Naive thymus-derived CD4-positive, alpha-beta T cell (primary cell): ENCODE measurements at regions of chr12 and their contacts with region 1.

Region 1: DNA sequence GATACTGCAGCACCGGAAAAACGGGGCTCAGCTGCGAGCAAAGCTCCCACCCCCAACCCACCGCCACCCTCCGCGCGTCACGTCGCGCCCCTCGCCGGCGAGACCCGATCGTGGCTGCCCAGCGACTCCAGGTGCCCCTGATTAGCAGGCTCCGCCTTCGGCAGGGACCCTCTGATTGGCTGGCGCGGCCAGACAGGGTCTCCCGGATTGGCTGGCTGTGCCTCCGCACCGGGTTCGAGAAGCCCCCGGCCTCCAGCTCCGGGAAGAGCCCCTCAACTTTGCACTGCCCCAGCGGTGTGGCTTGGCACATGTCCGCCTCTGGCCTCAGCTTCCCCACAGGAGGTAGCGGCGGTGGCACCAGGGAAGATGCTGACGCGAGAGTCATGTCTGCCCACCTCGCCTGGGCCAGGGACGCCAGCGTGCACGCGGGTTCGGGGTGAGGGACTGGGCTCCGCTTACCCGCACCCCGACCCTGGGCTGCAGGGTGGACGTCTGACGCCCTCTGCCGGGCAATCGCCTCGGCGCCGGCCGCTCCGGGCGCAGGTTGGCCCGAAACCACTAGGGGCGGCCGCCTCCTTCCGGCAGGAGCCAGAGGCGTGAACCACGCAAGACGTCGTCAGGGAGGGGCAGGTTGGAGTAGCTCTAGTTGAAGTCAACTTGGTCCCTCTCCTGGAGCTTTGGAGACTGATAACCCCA is 498 bp upstream of the RHOF start:
- DNase-seq: peak; percentile 91 to 98 (median 95)
- ATAC-seq: peak; percentile 77
- H3K4me3 ChIP-seq: peak overlapping the region; percentile 99
- H3K4me3 Mint-ChIP-seq: peak overlapping the region; percentile 84 to 99 (median 93)
- H3K27ac ChIP-seq: peak overlapping the region; percentile 96
- H3K27ac Mint-ChIP-seq: peak overlapping the region; percentile 85 to 99 (median 95)
- H3K4me1 ChIP-seq: peaks cover 44 to 50% of the 10 kb centered on the region in 2 donors
- H3K4me1 Mint-ChIP-seq: peaks cover 44 to 72% (median 59%) of the 10 kb centered on the region in 7 donors
- H3K27me3 ChIP-seq: no peaks in the 10 kb centered on the region
- H3K27me3 Mint-ChIP-seq: no peaks in the 10 kb centered on the region

Region 2: GRCh38 chr12:121159467-121160307 is 634.3 kb before region 1 on chr12:
- CTCF ChIA-PET with region 1: no interaction called
- POLR2A ChIA-PET with region 1: no interaction called
- intact Hi-C with region 1: no loop called
- DNase-seq: no peak
- ATAC-seq: no peak
- H3K4me3 ChIP-seq: no peak overlapping the region
- H3K4me3 Mint-ChIP-seq: no peak overlapping the region
- H3K27ac ChIP-seq: no peak overlapping the region
- H3K27ac Mint-ChIP-seq: no peak overlapping the region
- H3K4me1 ChIP-seq: no peaks in the 10 kb centered on the region
- H3K4me1 Mint-ChIP-seq: peaks cover 0 to 9% (median 0%) of the 10 kb centered on the region in 7 donors
- H3K27me3 ChIP-seq: no peaks in the 10 kb centered on the region
- H3K27me3 Mint-ChIP-seq: no peaks in the 10 kb centered on the region

Region 3: DNA sequence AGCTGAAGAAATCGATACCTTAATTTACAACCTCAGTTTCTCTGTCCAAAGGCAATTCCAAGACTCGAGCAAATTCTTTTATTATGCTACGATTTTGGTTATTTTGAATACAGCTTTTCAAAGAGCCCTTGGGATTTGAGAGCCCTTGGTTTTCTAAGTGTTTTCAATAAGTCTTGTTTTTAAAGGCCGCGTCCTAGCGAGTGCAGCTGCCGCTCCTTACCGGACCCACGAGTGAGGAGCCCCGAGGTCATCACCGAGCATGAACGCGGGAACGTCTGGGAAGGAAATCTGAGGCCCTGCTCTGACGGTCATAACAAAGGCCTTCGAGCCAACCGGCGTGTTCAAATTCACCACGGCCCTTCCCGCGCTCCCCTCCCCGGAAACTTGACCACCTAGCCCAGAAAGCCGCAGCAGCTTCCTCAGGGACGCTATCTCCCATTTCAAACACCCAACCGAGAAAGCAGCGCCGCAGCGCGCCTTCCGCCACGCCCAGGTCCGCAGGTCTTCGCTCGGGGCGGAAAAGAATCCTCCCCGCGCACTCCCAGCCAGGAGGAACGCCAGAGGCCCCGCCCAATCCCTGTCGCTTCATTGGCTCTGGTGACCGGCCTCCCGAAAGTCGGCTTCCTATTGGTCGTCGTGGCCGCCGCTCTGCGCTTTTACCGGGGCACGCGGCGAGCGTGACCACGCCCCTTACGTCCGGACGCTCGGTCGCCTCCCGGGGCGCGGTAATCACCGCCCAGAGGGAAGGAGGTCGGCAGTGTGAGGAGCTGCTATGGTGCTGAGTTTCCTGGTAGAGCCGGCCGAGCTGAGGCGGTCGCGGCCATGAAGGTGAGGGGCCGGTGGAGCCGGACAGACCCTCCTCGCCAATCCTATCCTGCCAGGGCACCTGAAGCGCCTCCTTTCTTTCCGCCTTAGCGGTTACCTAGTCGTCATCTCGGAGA is 394.3 kb before region 1 on chr12 and contains the start of gene RNF34:
- CTCF ChIA-PET with region 1: no interaction called
- POLR2A ChIA-PET with region 1: no interaction called
- intact Hi-C with region 1: loop called in 1 of 2 experiments (anchors 5 kb)
- DNase-seq: peak; percentile 88 to 98 (median 97)
- ATAC-seq: peak; percentile 96
- H3K4me3 ChIP-seq: peak within 1 kb of the TSS; percentile 93
- H3K4me3 Mint-ChIP-seq: peak within 1 kb of the TSS; percentile 89 to 99 (median 94)
- H3K27ac ChIP-seq: peak within 1 kb of the TSS; percentile 91
- H3K27ac Mint-ChIP-seq: peak within 1 kb of the TSS; percentile 91 to 97 (median 94)
- H3K4me1 ChIP-seq: peaks cover 20 to 26% of the 10 kb centered on the region in 2 donors
- H3K4me1 Mint-ChIP-seq: peaks cover 29 to 52% (median 39%) of the 10 kb centered on the region in 7 donors
- H3K27me3 ChIP-seq: no peaks in the 10 kb centered on the region
- H3K27me3 Mint-ChIP-seq: no peaks in the 10 kb centered on the region
- total RNA-seq, gene RNF34: 61.1 to 98.4 (median 81.7) TPM

Region 4: GRCh38 chr12:121637231-121637914 is 156.6 kb before region 1 on chr12:
- CTCF ChIA-PET with region 1: no interaction called
- POLR2A ChIA-PET with region 1: no interaction called
- intact Hi-C with region 1: no loop called
- DNase-seq: peak in 8 of 9 donors; percentile 38 to 53 (median 46)
- ATAC-seq: peak; percentile 79
- H3K4me3 ChIP-seq: peak overlapping the region; percentile 1
- H3K4me3 Mint-ChIP-seq: peak overlapping the region; percentile 61 to 82 (median 76)
- H3K27ac ChIP-seq: peak overlapping the region; percentile 83
- H3K27ac Mint-ChIP-seq: peak overlapping the region; percentile 82 to 95 (median 92)
- H3K4me1 ChIP-seq: peaks cover 35 to 50% of the 10 kb centered on the region in 2 donors
- H3K4me1 Mint-ChIP-seq: peaks cover 48 to 75% (median 61%) of the 10 kb centered on the region in 7 donors
- H3K27me3 ChIP-seq: no peaks in the 10 kb centered on the region
- H3K27me3 Mint-ChIP-seq: no peaks in the 10 kb centered on the region

Region 5: GRCh38 chr12:121688966-121689365 is 105.0 kb before region 1 on chr12:
- CTCF ChIA-PET with region 1: interaction called, 57 read pairs
- POLR2A ChIA-PET with region 1: interaction called, 5 read pairs
- intact Hi-C with region 1: loop called in 1 of 2 experiments (anchors 2 kb)
- DNase-seq: no peak
- ATAC-seq: no peak
- H3K4me3 ChIP-seq: no peak overlapping the region
- H3K4me3 Mint-ChIP-seq: no peak overlapping the region
- H3K27ac ChIP-seq: no peak overlapping the region
- H3K27ac Mint-ChIP-seq: peak overlapping the region in 6 of 9 donors; percentile 8 to 36 (median 22)
- H3K4me1 ChIP-seq: peaks cover 0 to 4% of the 10 kb centered on the region in 2 donors
- H3K4me1 Mint-ChIP-seq: peaks cover 0 to 16% (median 10%) of the 10 kb centered on the region in 7 donors
- H3K27me3 ChIP-seq: no peaks in the 10 kb centered on the region
- H3K27me3 Mint-ChIP-seq: peaks cover 0 to 6% (median 0%) of the 10 kb centered on the region in 5 donors

Region 6: GRCh38 chr12:121712461-121713256 is 81.3 kb before region 1 on chr12 and contains the start of gene TMEM120B:
- CTCF ChIA-PET with region 1: interaction called, 10 read pairs
- POLR2A ChIA-PET with region 1: interaction called, 48 read pairs
- intact Hi-C with region 1: loop called (anchors 2 to 5 kb)
- DNase-seq: peak; percentile 75 to 91 (median 86)
- ATAC-seq: peak; percentile 97
- H3K4me3 ChIP-seq: peak within 1 kb of the TSS; percentile 99
- H3K4me3 Mint-ChIP-seq: peak within 1 kb of the TSS; percentile 84 to 97 (median 94)
- H3K27ac ChIP-seq: peak within 1 kb of the TSS; percentile 82
- H3K27ac Mint-ChIP-seq: peak within 1 kb of the TSS; percentile 86 to 96 (median 92)
- H3K4me1 ChIP-seq: peaks cover 11 to 12% of the 10 kb centered on the region in 2 donors
- H3K4me1 Mint-ChIP-seq: peaks cover 7 to 37% (median 26%) of the 10 kb centered on the region in 7 donors
- H3K27me3 ChIP-seq: no peaks in the 10 kb centered on the region
- H3K27me3 Mint-ChIP-seq: no peaks in the 10 kb centered on the region
- total RNA-seq, gene TMEM120B: 7.3 to 14.3 (median 9.2) TPM

Region 7: GRCh38 chr12:121811434-121812319 is 17.7 kb after region 1 on chr12:
- CTCF ChIA-PET with region 1: interaction called, 609 read pairs
- POLR2A ChIA-PET with region 1: interaction called, 1,941 read pairs
- intact Hi-C with region 1: loop called (anchors 1 kb)
- DNase-seq: peak in 8 of 9 donors; percentile 55 to 86 (median 75)
- ATAC-seq: peak; percentile 92
- H3K4me3 ChIP-seq: peak overlapping the region; percentile 74
- H3K4me3 Mint-ChIP-seq: peak overlapping the region; percentile 75 to 92 (median 84)
- H3K27ac ChIP-seq: peak overlapping the region; percentile 63
- H3K27ac Mint-ChIP-seq: peak overlapping the region; percentile 23 to 92 (median 75)
- H3K4me1 ChIP-seq: peaks cover 38 to 48% of the 10 kb centered on the region in 2 donors
- H3K4me1 Mint-ChIP-seq: peaks cover 29 to 69% (median 47%) of the 10 kb centered on the region in 7 donors
- H3K27me3 ChIP-seq: no peaks in the 10 kb centered on the region
- H3K27me3 Mint-ChIP-seq: no peaks in the 10 kb centered on the region

Region 8: GRCh38 chr12:121894633-121895032 is 100.6 kb after region 1 on chr12:
- CTCF ChIA-PET with region 1: interaction called, 29 read pairs
- POLR2A ChIA-PET with region 1: interaction called, 33 read pairs
- intact Hi-C with region 1: loop called in 1 of 2 experiments (anchors 1 kb)
- DNase-seq: peak in 3 of 9 donors; percentile 10 to 21 (median 19)
- ATAC-seq: peak; percentile 46
- H3K4me3 ChIP-seq: no peak overlapping the region
- H3K4me3 Mint-ChIP-seq: peak overlapping the region in 2 of 10 donors; percentile 37 to 46
- H3K27ac ChIP-seq: no peak overlapping the region
- H3K27ac Mint-ChIP-seq: peak overlapping the region in 8 of 9 donors; percentile 38 to 89 (median 74)
- H3K4me1 ChIP-seq: peaks cover 11 to 18% of the 10 kb centered on the region in 2 donors
- H3K4me1 Mint-ChIP-seq: peaks cover 17 to 42% (median 38%) of the 10 kb centered on the region in 7 donors
- H3K27me3 ChIP-seq: no peaks in the 10 kb centered on the region
- H3K27me3 Mint-ChIP-seq: no peaks in the 10 kb centered on the region